ENCODE measurements at regions of chr11 and their contacts with region 1.

Region 1: DNA sequence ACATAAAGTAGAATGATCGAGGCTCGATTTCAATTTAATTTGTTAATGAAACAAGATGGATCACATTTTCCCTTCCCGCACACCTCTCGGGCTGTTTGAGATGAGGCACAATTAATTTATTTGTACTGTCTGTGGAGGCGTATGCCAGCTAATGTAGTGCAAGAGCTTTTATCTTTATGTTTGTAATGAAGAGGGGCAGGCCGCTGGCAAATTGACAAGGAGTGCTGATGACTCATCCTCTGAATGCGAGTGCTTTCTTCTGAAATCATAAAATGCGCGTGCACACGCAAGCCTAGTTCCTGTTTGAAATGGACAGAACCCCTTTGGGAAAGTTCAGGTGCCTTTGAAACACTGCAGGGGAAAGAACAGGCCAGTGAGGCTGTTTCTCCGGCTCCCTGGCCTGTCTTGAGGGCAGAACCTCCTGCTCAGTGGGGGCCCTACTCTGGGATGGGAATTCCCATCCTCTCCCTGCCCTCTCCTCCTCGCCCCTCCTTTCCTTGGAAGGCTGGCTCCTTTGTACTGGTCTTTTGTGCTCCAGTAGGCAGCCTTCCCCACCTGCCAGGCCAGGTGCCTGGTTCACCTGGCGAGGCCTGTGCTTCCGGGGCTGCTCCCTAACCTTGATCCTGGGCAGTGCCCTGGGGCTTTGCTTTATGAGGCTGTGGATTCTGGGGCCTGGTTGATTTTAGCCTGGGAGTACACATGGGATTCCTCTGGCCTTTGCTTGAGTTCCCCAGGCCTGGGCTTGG is 50.3 kb downstream of the TEAD1 start:
- DNase-seq: peak; percentile 86
- H3K4me3 Mint-ChIP-seq: peak overlapping the region; percentile 79
- H3K27ac Mint-ChIP-seq: peak overlapping the region; percentile 100
- H3K4me1 Mint-ChIP-seq: peaks cover 94% of the 10 kb centered on the region
- H3K27me3 Mint-ChIP-seq: no peaks in the 10 kb centered on the region
- CTCF ChIP-seq: no peak

Region 2: GRCh38 chr11:12693479-12694181 is 30.8 kb before region 1 on chr11:
- CTCF ChIA-PET with region 1: interaction called, 4 read pairs
- intact Hi-C with region 1: loop called (anchors 2 kb)
- DNase-seq: peak; percentile 59
- H3K4me3 Mint-ChIP-seq: peak overlapping the region; percentile 62
- H3K27ac Mint-ChIP-seq: peak overlapping the region; percentile 94
- H3K4me1 Mint-ChIP-seq: peaks cover 83% of the 10 kb centered on the region
- H3K27me3 Mint-ChIP-seq: no peaks in the 10 kb centered on the region
- CTCF ChIP-seq: no peak

Region 3: GRCh38 chr11:12769834-12770345 is 45.4 kb after region 1 on chr11:
- CTCF ChIA-PET with region 1: no interaction called
- intact Hi-C with region 1: loop called (anchors 5 kb)
- DNase-seq: peak; percentile 35
- H3K4me3 Mint-ChIP-seq: no peak overlapping the region
- H3K27ac Mint-ChIP-seq: no peak overlapping the region
- H3K4me1 Mint-ChIP-seq: peaks cover 18% of the 10 kb centered on the region
- H3K27me3 Mint-ChIP-seq: no peaks in the 10 kb centered on the region
- CTCF ChIP-seq: no peak

Region 4: DNA sequence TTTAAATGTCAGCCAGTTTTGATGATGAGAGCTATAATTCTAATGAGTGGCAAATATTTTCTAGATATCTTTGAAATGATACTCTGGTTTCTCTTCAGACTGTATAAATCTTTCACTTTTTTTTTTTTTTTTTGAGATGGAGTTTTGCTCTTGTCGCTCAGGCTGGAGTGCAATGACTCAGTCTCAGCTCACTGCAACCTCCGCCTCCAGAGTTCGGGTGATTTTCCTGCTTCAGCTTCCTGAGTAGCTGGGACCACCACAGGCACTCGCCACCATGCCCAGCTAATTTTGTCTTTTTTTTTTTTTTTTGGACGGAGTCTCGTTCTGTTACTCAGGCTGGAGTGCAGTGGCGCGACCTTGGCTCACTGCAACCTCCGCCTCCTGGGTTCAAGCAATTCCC is 63.4 kb after region 1 on chr11:
- CTCF ChIA-PET with region 1: no interaction called
- intact Hi-C with region 1: no loop called
- DNase-seq: no peak
- H3K4me3 Mint-ChIP-seq: no peak overlapping the region
- H3K27ac Mint-ChIP-seq: no peak overlapping the region
- H3K4me1 Mint-ChIP-seq: peaks cover 29% of the 10 kb centered on the region
- H3K27me3 Mint-ChIP-seq: no peaks in the 10 kb centered on the region
- CTCF ChIP-seq: no peak

Region 5: GRCh38 chr11:12853652-12854296 is 129.3 kb after region 1 on chr11:
- CTCF ChIA-PET with region 1: no interaction called
- intact Hi-C with region 1: loop called (anchors 10 kb)
- DNase-seq: peak; percentile 49
- H3K4me3 Mint-ChIP-seq: peak overlapping the region; percentile 36
- H3K27ac Mint-ChIP-seq: peak overlapping the region; percentile 88
- H3K4me1 Mint-ChIP-seq: peaks cover 70% of the 10 kb centered on the region
- H3K27me3 Mint-ChIP-seq: no peaks in the 10 kb centered on the region
- CTCF ChIP-seq: no peak

Region 6: DNA sequence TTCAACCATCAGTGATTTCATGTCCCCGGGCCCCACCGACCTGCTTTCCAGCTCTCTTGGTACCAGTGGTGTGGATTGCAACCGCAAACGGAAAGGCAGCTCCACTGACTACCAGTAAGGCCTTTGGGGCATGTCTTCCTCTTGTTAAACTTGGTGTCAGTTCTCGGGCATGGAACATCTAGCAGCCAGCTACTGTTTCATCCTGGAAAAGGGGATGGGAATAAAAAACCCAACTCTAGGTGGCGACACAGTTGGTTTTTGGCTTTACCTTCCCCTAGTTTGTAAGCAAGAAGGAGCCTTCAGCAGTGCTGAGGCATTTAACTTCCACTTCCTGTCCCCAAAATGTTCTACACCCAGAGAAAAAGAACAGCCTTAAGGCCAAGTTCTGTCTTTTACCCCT is 629.9 kb after region 1 on chr11:
- CTCF ChIA-PET with region 1: no interaction called
- intact Hi-C with region 1: no loop called
- DNase-seq: no peak
- H3K4me3 Mint-ChIP-seq: no peak overlapping the region
- H3K27ac Mint-ChIP-seq: no peak overlapping the region
- H3K4me1 Mint-ChIP-seq: no peaks in the 10 kb centered on the region
- H3K27me3 Mint-ChIP-seq: no peaks in the 10 kb centered on the region
- CTCF ChIP-seq: peak; percentile 35